ENCODE measurements at regions of chr11 and their contacts with region 1.

Region 1: DNA sequence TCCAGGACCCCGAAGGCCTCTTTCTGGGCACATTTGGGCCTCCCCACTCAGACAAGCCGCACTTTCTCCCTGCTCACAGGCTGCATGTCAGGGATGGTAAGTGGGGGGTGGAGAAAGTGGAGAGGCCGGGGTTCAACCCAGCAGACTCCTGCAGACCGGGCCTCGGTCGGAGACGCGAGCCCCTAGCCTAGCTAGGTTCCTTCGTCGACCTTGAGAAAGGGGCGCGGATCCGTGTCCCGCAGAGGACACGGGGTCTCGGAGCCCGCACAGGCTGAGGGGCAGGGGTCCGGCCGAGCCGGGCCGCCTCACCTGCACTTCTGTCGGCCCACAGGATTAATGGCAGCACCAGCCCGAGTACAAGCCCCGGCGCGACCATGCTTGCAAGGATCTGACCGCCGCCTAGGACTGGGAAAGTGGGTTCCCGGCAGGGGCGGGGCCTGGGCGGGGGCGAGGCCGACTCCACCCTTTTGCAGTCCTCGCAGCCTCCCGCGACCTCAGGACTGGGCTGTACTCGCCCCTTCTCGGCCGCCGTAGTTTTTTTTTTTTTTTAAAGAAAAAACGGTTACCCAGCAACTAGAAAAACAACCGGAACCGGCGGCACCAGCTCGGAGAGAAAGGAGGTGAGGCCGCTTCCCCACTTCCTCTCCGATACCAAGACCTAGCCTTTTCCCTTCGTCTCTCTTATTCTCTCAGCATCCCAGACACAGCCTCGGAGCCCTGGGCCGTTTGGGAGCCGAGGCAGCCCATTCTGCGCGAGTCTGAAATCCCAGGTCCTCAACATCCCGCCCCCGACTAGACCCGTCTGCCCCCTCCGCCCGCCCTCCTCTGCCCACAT is at the starts of genes SIAE and SPA17:
- DNase-seq: peak; percentile 82
- ATAC-seq: peak; percentile 91
- H3K4me3 Mint-ChIP-seq: peak within 1 kb of the TSS; percentile 92
- H3K27ac Mint-ChIP-seq: peak within 1 kb of the TSS; percentile 95
- H3K4me1 Mint-ChIP-seq: peaks cover 27% of the 10 kb centered on the region
- H3K27me3 Mint-ChIP-seq: no peaks in the 10 kb centered on the region
- CTCF ChIP-seq: no peak
- total RNA-seq, gene SIAE: 2.6 and 3.4 TPM in 2 replicates
- total RNA-seq, gene SPA17: 1.2 and 1.6 TPM in 2 replicates

Region 2: DNA sequence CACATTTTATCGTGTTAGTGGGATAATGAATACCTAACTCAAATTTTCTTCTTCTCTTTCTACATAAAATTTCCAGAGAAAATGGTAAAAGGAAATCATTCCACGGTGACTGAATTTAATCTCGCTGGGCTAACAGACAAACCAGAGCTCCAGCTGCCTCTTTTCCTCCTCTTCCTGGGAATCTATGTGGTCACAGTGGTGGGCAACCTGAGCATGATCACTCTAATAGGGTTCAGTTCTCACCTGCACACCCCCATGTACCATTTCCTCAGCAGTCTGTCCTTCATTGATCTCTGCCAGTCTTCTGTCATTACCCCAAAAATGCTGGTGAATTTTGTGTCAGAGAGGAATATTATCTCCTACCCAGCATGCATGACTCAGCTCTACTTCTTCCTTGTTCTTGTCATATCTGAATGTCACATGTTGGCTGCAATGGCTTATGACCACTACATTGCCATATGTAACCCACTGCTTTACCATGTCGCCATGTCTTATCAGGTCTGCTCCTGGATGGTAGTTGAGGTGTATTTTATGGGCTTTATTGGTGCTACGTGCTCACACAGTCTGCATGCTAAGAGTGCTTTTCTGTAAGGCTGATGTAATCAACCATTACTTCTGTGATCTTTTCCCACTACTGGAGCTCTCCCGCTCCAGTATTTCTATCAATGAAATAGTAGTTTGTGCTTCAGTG is 466.3 kb before region 1 on chr11:
- CTCF ChIA-PET with region 1: no interaction called
- POLR2A ChIA-PET with region 1: no interaction called
- intact Hi-C with region 1: no loop called
- DNase-seq: no peak
- ATAC-seq: no peak
- H3K4me3 Mint-ChIP-seq: no peak overlapping the region
- H3K27ac Mint-ChIP-seq: no peak overlapping the region
- H3K4me1 Mint-ChIP-seq: no peaks in the 10 kb centered on the region
- H3K27me3 Mint-ChIP-seq: no peaks in the 10 kb centered on the region
- CTCF ChIP-seq: no peak

Region 3: GRCh38 chr11:124622531-124623451 is 50.8 kb before region 1 on chr11 and contains the start of gene TBRG1:
- CTCF ChIA-PET with region 1: interaction called, 3 read pairs
- POLR2A ChIA-PET with region 1: interaction called, 15 read pairs
- intact Hi-C with region 1: loop called (anchors 1 kb)
- DNase-seq: peak; percentile 71
- ATAC-seq: peak; percentile 97
- H3K4me3 Mint-ChIP-seq: peak within 1 kb of the TSS; percentile 94
- H3K27ac Mint-ChIP-seq: peak within 1 kb of the TSS; percentile 91
- H3K4me1 Mint-ChIP-seq: peaks cover 27% of the 10 kb centered on the region
- H3K27me3 Mint-ChIP-seq: peaks cover 22% of the 10 kb centered on the region
- CTCF ChIP-seq: no peak
- total RNA-seq, gene TBRG1: 43.7 and 54.6 TPM in 2 replicates

Region 4: GRCh38 chr11:124739479-124740276 is 66.1 kb after region 1 on chr11 and contains the start of gene NRGN:
- CTCF ChIA-PET with region 1: interaction called, 15 read pairs
- POLR2A ChIA-PET with region 1: interaction called, 9 read pairs
- intact Hi-C with region 1: loop called (anchors 1 kb)
- DNase-seq: peak; percentile 75
- ATAC-seq: peak; percentile 98
- H3K4me3 Mint-ChIP-seq: peak within 1 kb of the TSS; percentile 83
- H3K27ac Mint-ChIP-seq: no peak within 1 kb of the TSS
- H3K4me1 Mint-ChIP-seq: peaks cover 19% of the 10 kb centered on the region
- H3K27me3 Mint-ChIP-seq: no peaks in the 10 kb centered on the region
- CTCF ChIP-seq: no peak
- total RNA-seq, gene NRGN: 0.69 and 1.0 TPM in 2 replicates

Region 5: DNA sequence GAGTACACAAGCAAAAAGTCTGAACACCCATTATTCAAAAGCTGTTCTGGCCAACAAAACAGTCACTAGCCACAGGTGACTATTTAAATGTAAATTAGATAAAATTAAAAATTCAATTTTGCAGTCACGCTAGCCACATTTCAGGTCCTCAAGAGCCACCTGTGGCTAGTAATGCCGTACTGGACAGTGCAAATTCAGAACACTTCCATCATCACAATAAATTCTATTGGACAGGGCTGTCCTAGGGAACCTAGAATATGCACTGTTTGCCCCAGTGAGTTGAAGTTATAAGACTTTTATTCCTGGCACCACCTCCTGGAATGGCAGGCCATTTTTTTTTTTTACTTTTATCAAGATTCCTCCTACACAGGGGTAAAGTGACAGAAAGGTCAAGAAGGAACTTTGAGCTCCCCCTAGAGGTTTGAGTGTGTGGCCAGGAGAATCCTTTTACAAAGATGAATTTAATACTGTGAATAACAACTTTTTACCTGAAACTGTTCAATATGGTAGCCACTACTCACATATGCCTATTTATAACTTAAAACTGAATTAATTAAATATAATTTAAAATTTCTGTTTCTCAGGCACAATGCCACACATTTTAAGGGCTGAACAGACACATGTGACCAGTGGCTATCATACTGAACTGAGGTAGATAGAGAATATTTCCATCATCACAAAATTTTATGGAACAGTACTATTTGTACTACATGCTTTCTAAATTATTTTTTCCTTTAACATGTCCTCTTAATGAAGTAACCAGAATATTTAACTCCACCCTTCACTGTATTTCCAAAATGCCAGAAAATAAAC is 120.1 kb after region 1 on chr11:
- CTCF ChIA-PET with region 1: interaction called, 33 read pairs
- POLR2A ChIA-PET with region 1: interaction called, 3 read pairs
- intact Hi-C with region 1: loop called (anchors 1 kb)
- DNase-seq: no peak
- ATAC-seq: peak; percentile 60
- H3K4me3 Mint-ChIP-seq: no peak overlapping the region
- H3K27ac Mint-ChIP-seq: no peak overlapping the region
- H3K4me1 Mint-ChIP-seq: peaks cover 23% of the 10 kb centered on the region
- H3K27me3 Mint-ChIP-seq: no peaks in the 10 kb centered on the region
- CTCF ChIP-seq: peak; percentile 31

Region 6: GRCh38 chr11:124865921-124866583 is 192.5 kb after region 1 on chr11:
- CTCF ChIA-PET with region 1: interaction called, 11 read pairs
- POLR2A ChIA-PET with region 1: no interaction called
- intact Hi-C with region 1: loop called (anchors 1 kb)
- DNase-seq: peak; percentile 43
- ATAC-seq: peak; percentile 28
- H3K4me3 Mint-ChIP-seq: no peak overlapping the region
- H3K27ac Mint-ChIP-seq: no peak overlapping the region
- H3K4me1 Mint-ChIP-seq: peaks cover 30% of the 10 kb centered on the region
- H3K27me3 Mint-ChIP-seq: peaks cover 85% of the 10 kb centered on the region
- CTCF ChIP-seq: no peak

Region 7: GRCh38 chr11:125070699-125071254 is 397.2 kb after region 1 on chr11:
- CTCF ChIA-PET with region 1: no interaction called
- POLR2A ChIA-PET with region 1: no interaction called
- intact Hi-C with region 1: loop called (anchors 5 kb)
- DNase-seq: no peak
- ATAC-seq: peak; percentile 69
- H3K4me3 Mint-ChIP-seq: peak overlapping the region; percentile 40
- H3K27ac Mint-ChIP-seq: peak overlapping the region; percentile 82
- H3K4me1 Mint-ChIP-seq: peaks cover 71% of the 10 kb centered on the region
- H3K27me3 Mint-ChIP-seq: peaks cover 2% of the 10 kb centered on the region
- CTCF ChIP-seq: no peak

Region 8: DNA sequence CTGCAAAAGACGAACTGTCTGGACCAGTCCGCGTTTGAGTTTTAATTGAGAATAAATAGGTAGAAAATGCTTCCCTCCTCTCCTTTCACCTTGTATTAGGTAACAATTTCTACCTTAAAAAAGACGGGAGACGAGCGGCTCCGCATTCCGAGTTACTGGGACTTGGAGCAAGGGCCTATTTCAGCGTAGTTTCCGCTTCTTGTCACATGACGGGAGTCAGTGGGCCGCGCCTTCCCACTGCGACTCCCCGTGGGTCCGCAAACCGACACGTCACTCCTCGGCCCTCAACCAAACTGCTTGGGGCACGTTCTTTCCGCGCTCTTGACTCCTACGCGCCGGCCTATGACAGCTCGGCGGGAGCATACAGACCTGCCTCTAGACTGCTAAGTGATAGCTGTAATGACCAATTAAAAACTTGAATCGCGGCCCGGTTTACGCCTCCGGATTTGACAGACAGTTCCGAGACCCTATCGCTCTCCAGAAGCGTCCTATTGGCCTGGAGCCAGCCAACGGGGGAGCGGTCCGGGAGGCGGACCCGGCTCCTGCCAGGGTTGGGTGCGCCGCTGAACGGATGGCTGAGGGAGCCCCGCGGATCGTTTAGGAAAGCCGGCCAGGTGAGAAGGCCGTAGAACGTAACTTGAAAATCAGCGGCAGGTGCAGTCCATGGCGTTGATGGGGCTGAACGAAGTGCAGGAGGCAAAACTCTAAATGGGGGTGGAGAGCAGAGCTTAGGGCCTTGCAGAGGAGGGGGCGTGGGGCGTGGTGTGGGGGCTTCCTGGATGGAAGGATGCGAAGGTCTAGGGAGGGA is 919.0 kb after region 1 on chr11 and contains the start of gene STT3A:
- CTCF ChIA-PET with region 1: no interaction called
- POLR2A ChIA-PET with region 1: no interaction called
- intact Hi-C with region 1: loop called (anchors 1 kb)
- DNase-seq: peak; percentile 90
- ATAC-seq: peak; percentile 92
- H3K4me3 Mint-ChIP-seq: peak within 1 kb of the TSS; percentile 95
- H3K27ac Mint-ChIP-seq: peak within 1 kb of the TSS; percentile 99
- H3K4me1 Mint-ChIP-seq: peaks cover 58% of the 10 kb centered on the region
- H3K27me3 Mint-ChIP-seq: no peaks in the 10 kb centered on the region
- CTCF ChIP-seq: no peak
- total RNA-seq, gene STT3A: 79.4 and 86.5 TPM in 2 replicates